PC-9 (cell line): ENCODE measurements at regions of chr6 and their contacts with region 1.

Region 1: DNA sequence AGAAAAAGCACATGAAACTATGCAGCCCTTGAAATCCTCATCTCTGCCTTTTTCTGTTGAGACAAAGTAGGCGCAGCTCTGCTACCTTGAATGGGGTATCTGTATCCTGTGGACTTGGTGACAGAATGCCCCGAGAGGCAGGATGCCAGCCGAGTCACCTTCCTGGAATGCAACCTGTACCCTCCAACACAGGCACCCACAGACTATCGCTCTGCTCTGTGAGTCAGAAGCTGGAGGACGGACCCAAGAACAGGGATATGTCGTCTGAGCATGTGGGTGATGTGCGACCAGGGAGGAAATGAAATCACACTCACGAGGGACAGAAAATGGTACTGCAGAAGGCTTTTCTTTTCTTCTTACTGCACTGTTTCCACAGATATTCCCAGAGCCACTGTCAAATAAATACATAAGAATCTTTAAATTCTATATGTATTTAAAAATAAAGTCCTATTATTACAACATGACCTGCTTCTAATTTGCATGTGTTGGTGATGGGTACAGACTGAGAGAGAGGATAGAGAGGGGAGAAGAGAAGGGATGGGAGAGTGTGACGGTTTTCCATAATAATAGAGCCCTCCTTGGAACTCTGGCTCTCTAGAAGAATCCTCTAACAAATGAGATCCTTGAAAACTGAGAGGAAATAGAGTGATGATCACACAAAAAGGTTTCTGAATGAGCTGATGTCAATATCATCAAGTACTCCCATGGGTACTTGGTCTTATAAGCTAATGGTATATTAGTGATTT is 308.1 kb downstream of the FOXC1 start:
- DNase-seq: peak; percentile 91 to 94
- H3K4me3 ChIP-seq: no peak overlapping the region
- H3K27ac ChIP-seq: peak overlapping the region; percentile 89
- H3K4me1 ChIP-seq: peaks cover 30% of the 10 kb centered on the region
- H3K27me3 ChIP-seq: no peaks in the 10 kb centered on the region
- CTCF ChIP-seq: no peak

Region 2: GRCh38 chr6:1767481-1768251 is 150.1 kb before region 1 on chr6:
- CTCF ChIA-PET with region 1: no interaction called
- POLR2A ChIA-PET with region 1: no interaction called
- intact Hi-C with region 1: loop called (anchors 2 kb)
- DNase-seq: peak; percentile 47 to 81
- H3K4me3 ChIP-seq: peak overlapping the region; percentile 43
- H3K27ac ChIP-seq: peak overlapping the region; percentile 94
- H3K4me1 ChIP-seq: peaks cover 50% of the 10 kb centered on the region
- H3K27me3 ChIP-seq: no peaks in the 10 kb centered on the region
- CTCF ChIP-seq: no peak